ENCODE measurements at regions of chr1 and their contacts with region 1.

Region 1: GRCh38 chr1:3900119-3900968 is at the start of gene C1orf174:
- DNase-seq: peak; percentile 88 to 99 (median 93)
- ATAC-seq: peak; percentile 83
- H3K4me3 ChIP-seq: peak within 1 kb of the TSS; percentile 55 to 68
- H3K4me3 Mint-ChIP-seq: peak within 1 kb of the TSS; percentile 88
- H3K27ac ChIP-seq: peak within 1 kb of the TSS; percentile 69 to 97
- H3K27ac Mint-ChIP-seq: peak within 1 kb of the TSS; percentile 92
- H3K4me1 ChIP-seq: peaks cover 49% of the 10 kb centered on the region
- H3K4me1 Mint-ChIP-seq: peaks cover 55% of the 10 kb centered on the region
- H3K27me3 ChIP-seq: no peaks in the 10 kb centered on the region
- H3K27me3 Mint-ChIP-seq: no peaks in the 10 kb centered on the region
- CTCF ChIP-seq: no peak
- total RNA-seq, gene C1orf174: 19.1 to 20.9 TPM

Region 2: GRCh38 chr1:3530926-3531818 is 369.2 kb before region 1 on chr1:
- CTCF ChIA-PET with region 1: no interaction called
- POLR2A ChIA-PET with region 1: no interaction called
- intact Hi-C with region 1: loop called in 1 of 2 experiments (anchors 2 kb)
- DNase-seq: peak; percentile 60 to 93 (median 79)
- ATAC-seq: peak; percentile 84
- H3K4me3 ChIP-seq: peak overlapping the region; percentile 62 to 82
- H3K4me3 Mint-ChIP-seq: peak overlapping the region; percentile 84
- H3K27ac ChIP-seq: peak overlapping the region in 1 of 2 experiments; percentile 61
- H3K27ac Mint-ChIP-seq: peak overlapping the region; percentile 87
- H3K4me1 ChIP-seq: peaks cover 10% of the 10 kb centered on the region
- H3K4me1 Mint-ChIP-seq: peaks cover 15% of the 10 kb centered on the region
- H3K27me3 ChIP-seq: no peaks in the 10 kb centered on the region
- H3K27me3 Mint-ChIP-seq: no peaks in the 10 kb centered on the region
- CTCF ChIP-seq: no peak

Region 3: DNA sequence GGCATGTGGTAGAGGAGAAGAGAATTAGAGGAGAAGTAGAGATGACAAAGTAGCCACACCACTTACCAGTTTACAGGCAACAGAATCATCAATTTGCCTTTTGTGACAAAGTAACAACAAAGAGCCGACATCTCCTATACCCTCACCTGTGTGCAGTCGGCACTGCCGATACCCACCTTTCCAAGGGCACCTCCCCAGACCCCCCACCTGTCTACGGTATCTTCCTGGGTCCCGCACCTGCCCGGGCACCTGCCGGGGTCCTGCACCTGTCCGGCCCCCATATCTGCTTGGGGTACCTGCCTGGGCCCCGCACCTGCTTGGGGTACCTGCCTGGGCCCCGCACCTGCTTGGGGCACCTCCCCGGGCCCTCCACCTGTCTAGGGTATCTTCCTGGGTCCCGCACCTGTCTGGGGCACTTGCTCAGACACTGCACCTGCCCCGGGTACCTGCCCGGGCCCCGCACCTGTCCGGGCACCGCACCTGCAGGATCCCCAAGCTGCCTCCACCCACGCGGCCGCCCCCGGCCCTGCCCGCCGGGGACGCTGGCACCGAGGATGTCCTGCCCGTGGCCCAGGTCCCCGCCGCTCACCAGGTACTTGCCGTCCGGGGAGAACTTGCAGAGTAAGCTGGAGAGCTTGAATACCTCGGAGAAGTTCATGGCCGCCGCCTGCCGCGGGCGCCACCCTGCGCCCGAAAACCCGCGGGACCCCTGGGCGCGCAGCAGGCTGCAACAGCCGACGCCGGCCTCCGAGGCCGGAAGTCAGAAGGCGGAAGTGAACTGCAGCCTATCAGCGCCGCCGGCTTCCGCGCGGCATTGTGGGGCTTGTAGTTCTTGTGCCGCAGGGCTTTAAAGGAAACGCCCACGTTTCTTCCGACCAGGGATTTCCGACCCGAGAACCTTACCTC is 250.7 kb before region 1 on chr1 and contains the start of gene WRAP73:
- CTCF ChIA-PET with region 1: no interaction called
- POLR2A ChIA-PET with region 1: no interaction called
- intact Hi-C with region 1: loop called in 1 of 2 experiments (anchors 2 kb)
- DNase-seq: peak; percentile 74 to 95 (median 88)
- ATAC-seq: peak; percentile 97
- H3K4me3 ChIP-seq: peak within 1 kb of the TSS; percentile 71
- H3K4me3 Mint-ChIP-seq: peak within 1 kb of the TSS; percentile 78
- H3K27ac ChIP-seq: peak within 1 kb of the TSS in 1 of 2 experiments; percentile 50
- H3K27ac Mint-ChIP-seq: no peak within 1 kb of the TSS
- H3K4me1 ChIP-seq: peaks cover 38% of the 10 kb centered on the region
- H3K4me1 Mint-ChIP-seq: peaks cover 32% of the 10 kb centered on the region
- H3K27me3 ChIP-seq: peaks cover 22 to 24% of the 10 kb centered on the region in 2 experiments
- H3K27me3 Mint-ChIP-seq: peaks cover 23% of the 10 kb centered on the region
- CTCF ChIP-seq: no peak
- total RNA-seq, gene WRAP73: 23.7 to 27.5 TPM

Region 4: GRCh38 chr1:3772027-3772714 is 128.2 kb before region 1 on chr1:
- CTCF ChIA-PET with region 1: no interaction called
- POLR2A ChIA-PET with region 1: no interaction called
- intact Hi-C with region 1: loop called in 1 of 2 experiments (anchors 1 kb)
- DNase-seq: peak; percentile 70 to 91 (median 87)
- ATAC-seq: peak; percentile 79
- H3K4me3 ChIP-seq: peak overlapping the region; percentile 39 to 71
- H3K4me3 Mint-ChIP-seq: peak overlapping the region; percentile 80
- H3K27ac ChIP-seq: no peak overlapping the region
- H3K27ac Mint-ChIP-seq: no peak overlapping the region
- H3K4me1 ChIP-seq: peaks cover 10% of the 10 kb centered on the region
- H3K4me1 Mint-ChIP-seq: peaks cover 10% of the 10 kb centered on the region
- H3K27me3 ChIP-seq: no peaks in the 10 kb centered on the region
- H3K27me3 Mint-ChIP-seq: peaks cover 3% of the 10 kb centered on the region
- CTCF ChIP-seq: no peak

Region 5: GRCh38 chr1:3856908-3857790 is 43.2 kb before region 1 on chr1 and contains the starts of genes CEP104 and DFFB:
- CTCF ChIA-PET with region 1: interaction called, 4 read pairs
- POLR2A ChIA-PET with region 1: interaction called, 27 read pairs
- intact Hi-C with region 1: loop called (anchors 1 kb)
- DNase-seq: peak; percentile 92 to 99 (median 97)
- ATAC-seq: peak; percentile 97
- H3K4me3 ChIP-seq: peak within 1 kb of the TSS; percentile 92 to 98
- H3K4me3 Mint-ChIP-seq: peak within 1 kb of the TSS; percentile 98
- H3K27ac ChIP-seq: peak within 1 kb of the TSS; percentile 65 to 75
- H3K27ac Mint-ChIP-seq: peak within 1 kb of the TSS; percentile 91
- H3K4me1 ChIP-seq: peaks cover 27% of the 10 kb centered on the region
- H3K4me1 Mint-ChIP-seq: peaks cover 40% of the 10 kb centered on the region
- H3K27me3 ChIP-seq: no peaks in the 10 kb centered on the region
- H3K27me3 Mint-ChIP-seq: no peaks in the 10 kb centered on the region
- CTCF ChIP-seq: no peak
- total RNA-seq, gene CEP104: 15.5 to 16.8 TPM
- total RNA-seq, gene DFFB: 3.4 to 3.7 TPM

Region 6: DNA sequence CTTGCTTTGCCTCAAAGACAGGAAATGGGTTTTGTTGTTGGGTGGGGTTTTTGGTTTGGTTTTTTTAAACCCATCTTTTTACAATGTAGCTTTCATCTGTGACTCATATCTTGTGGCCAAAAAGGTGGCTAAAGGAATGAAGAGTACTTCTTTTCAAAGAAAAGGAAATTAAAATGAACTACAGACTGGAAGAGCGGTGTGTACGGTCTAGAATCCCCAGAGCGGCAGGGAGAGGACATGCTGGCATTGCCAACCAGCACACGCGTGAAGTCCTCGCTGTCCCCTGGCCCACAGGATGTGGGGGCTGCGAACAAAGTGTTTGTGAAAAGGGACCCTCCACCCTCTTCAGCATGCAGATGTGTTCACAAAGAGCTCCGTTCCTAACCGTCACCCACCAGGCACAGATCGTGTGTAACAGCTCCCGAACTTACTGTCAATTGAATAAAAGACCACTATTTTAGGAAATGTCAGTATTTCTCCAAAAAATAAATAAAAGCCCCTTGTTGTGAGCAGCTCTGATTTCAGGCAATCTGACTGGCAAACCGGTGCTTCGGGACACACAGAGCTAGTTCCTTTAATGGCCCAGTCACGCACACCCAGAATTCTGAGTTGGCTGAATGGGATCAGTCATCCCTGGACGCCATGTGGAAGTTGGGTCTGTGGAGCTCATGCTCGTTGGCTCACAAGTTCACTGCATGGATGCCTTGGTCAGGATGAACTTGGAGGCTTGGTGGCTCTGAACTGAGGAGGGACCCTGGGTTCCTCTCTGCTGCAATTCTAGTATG is 1488.9 kb after region 1 on chr1:
- CTCF ChIA-PET with region 1: no interaction called
- POLR2A ChIA-PET with region 1: no interaction called
- intact Hi-C with region 1: loop called in 1 of 2 experiments (anchors 5 kb)
- DNase-seq: peak in 7 of 9 experiments; percentile 10 to 84 (median 51)
- ATAC-seq: peak; percentile 83
- H3K4me3 ChIP-seq: peak overlapping the region; percentile 24 to 30
- H3K4me3 Mint-ChIP-seq: peak overlapping the region; percentile 85
- H3K27ac ChIP-seq: peak overlapping the region; percentile 35 to 51
- H3K27ac Mint-ChIP-seq: peak overlapping the region; percentile 96
- H3K4me1 ChIP-seq: peaks cover 52% of the 10 kb centered on the region
- H3K4me1 Mint-ChIP-seq: peaks cover 43% of the 10 kb centered on the region
- H3K27me3 ChIP-seq: no peaks in the 10 kb centered on the region
- H3K27me3 Mint-ChIP-seq: no peaks in the 10 kb centered on the region
- CTCF ChIP-seq: no peak